ENCODE measurements at regions of chr20 and their contacts with region 1.

Region 1: GRCh38 chr20:44310664-44311639 is at the start of gene FITM2:
- DNase-seq: peak; percentile 98 to 100 (median 99)
- ATAC-seq: peak; percentile 72 to 90 (median 88)
- H3K4me3 ChIP-seq: peak within 1 kb of the TSS; percentile 62 to 98 (median 81)
- H3K27ac ChIP-seq: peak within 1 kb of the TSS; percentile 66 to 95 (median 88)
- H3K4me1 ChIP-seq: peaks cover 0 to 47% (median 17%) of the 10 kb centered on the region in 12 donors
- H3K27me3 ChIP-seq: no peaks in the 10 kb centered on the region
- CTCF ChIP-seq: peak; percentile 92 to 98 (median 96)
- POLR2A ChIP-seq: peak in 1 of 2 donors; percentile 80
- total RNA-seq, gene FITM2: 71.7 to 165 (median 125) TPM

Region 2: GRCh38 chr20:43300901-43301300 is 1010.1 kb before region 1 on chr20:
- intact Hi-C with region 1: no loop called
- DNase-seq: no peak
- ATAC-seq: no peak
- H3K4me3 ChIP-seq: no peak overlapping the region
- H3K27ac ChIP-seq: no peak overlapping the region
- H3K4me1 ChIP-seq: no peaks in the 10 kb centered on the region
- H3K27me3 ChIP-seq: no peaks in the 10 kb centered on the region
- CTCF ChIP-seq: no peak
- POLR2A ChIP-seq: no peak

Region 3: DNA sequence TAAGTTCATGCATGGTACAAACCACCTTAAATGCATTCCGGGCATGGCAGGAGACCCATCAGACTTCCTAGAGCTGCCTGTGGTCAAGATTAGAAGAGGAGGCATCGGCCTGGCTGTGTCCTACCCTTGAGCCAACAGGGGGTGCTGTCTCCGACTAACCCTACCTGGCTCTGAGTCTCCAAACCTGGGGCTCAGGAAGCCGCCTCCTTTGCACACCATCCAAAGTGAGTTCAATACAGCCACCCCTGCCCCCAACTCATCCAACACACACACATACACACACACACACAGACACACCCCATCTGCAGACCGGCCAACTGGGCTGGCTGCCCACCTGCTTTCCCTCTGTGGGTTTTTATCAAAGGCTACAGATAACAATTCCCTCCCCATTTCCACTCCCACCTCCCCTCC is 201.0 kb before region 1 on chr20:
- intact Hi-C with region 1: loop called in 5 of 10 experiments (anchors 5 to 10 kb)
- DNase-seq: peak in 1 of 5 donors; percentile 30
- ATAC-seq: peak in 1 of 4 donors; percentile 27
- H3K4me3 ChIP-seq: no peak overlapping the region
- H3K27ac ChIP-seq: peak overlapping the region in 1 of 12 donors; percentile 75
- H3K4me1 ChIP-seq: peaks cover 0 to 45% (median 3%) of the 10 kb centered on the region in 12 donors
- H3K27me3 ChIP-seq: peaks cover 0 to 4% (median 0%) of the 10 kb centered on the region in 9 donors
- CTCF ChIP-seq: peak in 7 of 12 donors; percentile 8 to 40 (median 19)
- POLR2A ChIP-seq: no peak

Region 4: DNA sequence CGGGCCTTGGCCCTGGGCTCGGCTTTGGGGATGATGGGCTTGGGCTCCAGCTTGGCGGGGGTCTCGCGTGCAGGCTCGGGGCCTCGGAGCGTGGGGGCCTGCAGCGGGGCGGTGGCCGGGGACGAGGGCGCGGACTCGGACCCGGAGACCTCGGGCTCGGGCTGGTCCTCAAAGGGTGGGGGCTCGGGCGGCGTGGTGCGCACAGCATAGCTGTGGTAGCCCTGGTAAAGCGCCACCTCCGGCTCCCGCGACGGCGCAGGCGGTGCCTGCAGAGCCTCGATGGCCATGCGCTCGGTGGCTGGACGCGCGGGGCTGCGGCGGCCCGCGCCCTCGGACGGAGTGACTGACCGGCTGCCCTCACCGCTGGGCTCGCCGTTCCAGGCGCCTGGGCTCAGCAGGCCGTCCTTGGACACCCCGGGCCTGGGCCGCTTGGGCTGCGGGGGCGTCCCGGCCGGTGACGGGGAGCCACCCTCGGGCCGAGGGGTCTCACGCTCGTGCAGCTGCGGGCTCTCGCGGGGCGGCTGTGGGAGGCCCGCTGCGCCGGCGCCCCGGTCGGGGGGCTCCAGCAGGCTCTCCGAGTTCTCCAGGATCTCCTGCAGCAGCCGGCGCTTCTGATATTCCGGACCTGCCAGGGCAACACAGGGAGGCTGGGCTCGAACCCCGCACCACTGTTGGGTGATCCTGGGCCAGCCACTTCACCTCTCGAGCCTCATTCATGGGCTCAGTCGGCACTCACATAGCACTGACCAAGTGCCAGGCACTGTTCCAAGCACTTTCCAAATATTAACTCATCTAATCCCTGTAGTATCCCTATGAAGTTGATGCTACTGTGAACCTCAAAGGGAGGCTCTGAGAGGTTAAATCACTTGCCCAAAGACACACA is 194.9 kb before region 1 on chr20:
- intact Hi-C with region 1: loop called in 6 of 10 experiments (anchors 2 to 10 kb)
- DNase-seq: no peak
- ATAC-seq: peak in 2 of 4 donors; percentile 2
- H3K4me3 ChIP-seq: no peak overlapping the region
- H3K27ac ChIP-seq: peak overlapping the region in 9 of 12 donors; percentile 1 to 75 (median 30)
- H3K4me1 ChIP-seq: peaks cover 0 to 63% (median 5%) of the 10 kb centered on the region in 12 donors
- H3K27me3 ChIP-seq: peaks cover 0 to 17% (median 0%) of the 10 kb centered on the region in 9 donors
- CTCF ChIP-seq: no peak
- POLR2A ChIP-seq: no peak

Region 5: DNA sequence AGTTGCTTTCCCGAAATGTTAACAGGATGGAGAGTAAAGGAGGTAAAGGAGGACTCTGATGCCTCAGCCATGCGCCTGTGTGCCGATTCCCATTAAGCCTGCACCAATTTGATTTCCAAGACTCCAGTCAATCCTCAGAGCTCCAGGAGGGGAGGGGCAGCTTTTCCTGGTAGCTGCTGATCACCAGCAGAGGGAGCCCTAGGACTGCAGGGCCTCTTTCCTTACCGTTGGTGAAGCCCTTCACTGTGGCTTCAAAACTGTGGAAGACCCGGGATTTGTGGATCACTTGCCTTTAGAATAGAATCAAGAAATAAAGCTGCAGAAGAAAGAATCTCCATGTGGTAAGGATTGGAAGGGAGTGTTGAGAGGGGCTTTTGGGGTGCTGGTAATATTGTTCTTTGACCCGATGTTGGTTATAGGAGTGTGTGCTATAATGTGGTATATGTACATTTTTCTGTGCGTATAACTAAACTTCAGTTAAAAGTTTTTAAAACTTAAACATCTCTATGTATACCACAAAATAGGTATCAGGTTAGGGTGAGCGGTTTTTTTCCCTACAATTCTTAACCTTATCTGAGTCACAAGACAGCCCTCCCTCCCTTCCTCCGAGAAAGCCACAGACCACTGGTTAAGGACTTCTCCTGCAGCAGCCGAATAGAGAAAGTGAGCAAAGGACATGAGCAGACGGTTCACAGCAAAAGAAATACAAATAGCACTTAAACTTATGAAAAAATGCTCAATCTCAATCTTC is 93.4 kb before region 1 on chr20:
- intact Hi-C with region 1: loop called (anchors 1 to 2 kb)
- DNase-seq: peak; percentile 64 to 84 (median 69)
- ATAC-seq: peak in 3 of 4 donors; percentile 76 to 81 (median 78)
- H3K4me3 ChIP-seq: peak overlapping the region in 11 of 12 donors; percentile 3 to 46 (median 33)
- H3K27ac ChIP-seq: peak overlapping the region in 10 of 12 donors; percentile 12 to 72 (median 41)
- H3K4me1 ChIP-seq: peaks cover 0 to 21% (median 11%) of the 10 kb centered on the region in 12 donors
- H3K27me3 ChIP-seq: no peaks in the 10 kb centered on the region
- CTCF ChIP-seq: peak; percentile 76 to 92 (median 86)
- POLR2A ChIP-seq: no peak

Measured in heart left ventricle (tissue), 16 donors.